Left cardiac atrium (tissue), 4 donors: ENCODE measurements at regions of chr5 and their contacts with region 1.

Region 1: GRCh38 chr5:81194633-81195333 is 38.3 kb upstream of the CKMT2 start:
- DNase-seq: peak; percentile 85
- ATAC-seq: peak; percentile 96 to 97

Region 2: GRCh38 chr5:80437326-80437725 is 757.5 kb before region 1 on chr5:
- intact Hi-C with region 1: no loop called
- DNase-seq: no peak
- ATAC-seq: no peak

Region 3: GRCh38 chr5:80487829-80488721 is 706.7 kb before region 1 on chr5 and contains the start of gene FAM151B:
- intact Hi-C with region 1: loop called (anchors 10 kb)
- DNase-seq: peak; percentile 85
- ATAC-seq: peak; percentile 95 to 97
- total RNA-seq, gene FAM151B: 2.5 to 2.9 TPM

Region 4: DNA sequence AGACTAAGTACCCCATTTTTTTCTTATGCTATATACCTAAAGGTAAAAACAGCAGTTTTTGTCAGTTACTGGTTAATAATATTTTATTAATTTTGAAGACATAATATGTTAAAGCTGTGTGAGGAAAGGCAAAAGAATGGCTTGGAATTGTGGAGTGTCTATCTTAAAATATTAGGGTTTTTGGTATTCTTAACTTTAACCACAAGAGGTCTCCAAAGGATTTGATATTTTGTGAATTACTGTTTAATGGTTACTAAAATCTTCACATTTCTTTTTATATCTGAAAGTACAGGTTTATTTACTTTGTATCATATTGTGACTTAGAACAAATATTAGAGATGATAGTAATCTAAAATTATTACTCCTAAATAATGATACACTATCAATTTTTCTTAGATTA is 508.0 kb before region 1 on chr5:
- intact Hi-C with region 1: loop called in 1 of 2 experiments (anchors 5 kb)
- DNase-seq: no peak
- ATAC-seq: no peak

Region 5: DNA sequence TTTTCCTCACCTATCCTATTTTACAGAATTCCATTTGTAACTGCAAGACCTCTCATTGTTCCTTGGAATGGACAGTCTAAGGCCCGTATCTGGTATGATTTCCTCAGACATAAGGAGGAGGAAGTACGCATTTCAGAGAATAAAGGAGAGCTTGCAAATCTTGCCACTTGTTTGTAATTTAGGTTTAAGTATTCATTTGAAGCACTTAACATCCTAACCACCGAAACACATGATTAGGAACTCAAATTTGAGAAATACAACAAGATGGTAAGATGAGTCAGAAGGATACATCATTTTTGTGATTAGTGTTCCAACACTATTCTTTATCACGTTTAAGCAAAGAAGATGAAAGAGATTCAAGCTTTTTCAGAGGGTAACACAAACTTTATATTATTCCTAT is 102.7 kb after region 1 on chr5:
- intact Hi-C with region 1: loop called in 1 of 2 experiments (anchors 5 kb)
- DNase-seq: no peak
- ATAC-seq: no peak